Aorta (tissue), 5 donors: ENCODE measurements at regions of chr1 and their contacts with region 1.

Region 1: GRCh38 chr1:85330711-85331290 is 54.4 kb upstream of the BCL10 start:
- DNase-seq: peak in 1 of 2 donors; percentile 66
- ATAC-seq: no peak
- H3K4me3 ChIP-seq: no peak overlapping the region
- H3K27ac ChIP-seq: peak overlapping the region; percentile 95
- H3K4me1 ChIP-seq: peaks cover 0 to 15% of the 10 kb centered on the region in 2 donors
- H3K27me3 ChIP-seq: no peaks in the 10 kb centered on the region

Region 2: GRCh38 chr1:84810343-84810742 is 520.5 kb before region 1 on chr1:
- intact Hi-C with region 1: no loop called
- DNase-seq: no peak
- ATAC-seq: no peak
- H3K4me3 ChIP-seq: no peak overlapping the region
- H3K27ac ChIP-seq: no peak overlapping the region
- H3K4me1 ChIP-seq: no peaks in the 10 kb centered on the region
- H3K27me3 ChIP-seq: no peaks in the 10 kb centered on the region

Region 3: GRCh38 chr1:85220756-85221201 is 110.0 kb before region 1 on chr1:
- intact Hi-C with region 1: no loop called
- DNase-seq: no peak
- ATAC-seq: no peak
- H3K4me3 ChIP-seq: no peak overlapping the region
- H3K27ac ChIP-seq: peak overlapping the region in 1 of 2 donors; percentile 24
- H3K4me1 ChIP-seq: peaks cover 0 to 4% of the 10 kb centered on the region in 2 donors
- H3K27me3 ChIP-seq: no peaks in the 10 kb centered on the region

Region 4: DNA sequence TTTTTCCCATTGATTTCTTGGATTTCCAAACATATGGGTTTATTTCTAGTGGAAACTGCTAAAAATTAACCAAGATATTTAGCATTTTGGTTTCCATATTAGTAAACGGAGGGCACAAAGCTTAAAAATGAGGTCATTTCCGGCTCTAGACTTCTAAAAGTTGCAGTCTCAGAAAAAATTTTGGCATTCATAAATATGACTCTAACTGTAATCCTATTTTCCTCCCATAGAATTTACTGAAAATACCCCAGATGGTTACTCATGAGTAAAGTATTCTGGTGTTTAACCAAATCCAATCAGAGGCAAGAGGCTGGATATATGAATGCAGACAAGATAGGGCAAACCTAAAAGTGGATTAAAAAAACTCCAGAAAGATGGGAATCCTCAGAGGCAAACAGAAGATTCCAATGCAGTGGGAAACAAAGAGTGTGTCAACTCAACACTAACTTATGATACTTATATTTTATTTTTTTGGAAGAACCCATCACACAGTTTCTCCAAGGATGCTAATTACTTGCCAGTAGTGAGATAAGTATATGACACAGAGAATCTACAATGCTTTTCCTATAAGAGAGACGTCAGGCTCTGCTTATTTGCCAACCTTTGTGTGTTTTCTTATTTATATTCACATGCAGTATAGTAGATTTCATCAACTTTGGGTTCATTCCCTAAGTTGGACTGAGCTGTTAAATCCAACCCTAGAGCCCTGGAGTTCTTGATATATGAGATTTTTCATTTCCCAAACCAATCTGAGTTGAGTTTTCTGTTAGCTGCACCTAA is 35.8 kb after region 1 on chr1:
- intact Hi-C with region 1: loop called in 1 of 2 experiments (anchors 5 kb)
- DNase-seq: no peak
- ATAC-seq: no peak
- H3K4me3 ChIP-seq: no peak overlapping the region
- H3K27ac ChIP-seq: peak overlapping the region in 1 of 2 donors; percentile 67
- H3K4me1 ChIP-seq: peaks cover 1 to 11% of the 10 kb centered on the region in 2 donors
- H3K27me3 ChIP-seq: no peaks in the 10 kb centered on the region

Region 5: DNA sequence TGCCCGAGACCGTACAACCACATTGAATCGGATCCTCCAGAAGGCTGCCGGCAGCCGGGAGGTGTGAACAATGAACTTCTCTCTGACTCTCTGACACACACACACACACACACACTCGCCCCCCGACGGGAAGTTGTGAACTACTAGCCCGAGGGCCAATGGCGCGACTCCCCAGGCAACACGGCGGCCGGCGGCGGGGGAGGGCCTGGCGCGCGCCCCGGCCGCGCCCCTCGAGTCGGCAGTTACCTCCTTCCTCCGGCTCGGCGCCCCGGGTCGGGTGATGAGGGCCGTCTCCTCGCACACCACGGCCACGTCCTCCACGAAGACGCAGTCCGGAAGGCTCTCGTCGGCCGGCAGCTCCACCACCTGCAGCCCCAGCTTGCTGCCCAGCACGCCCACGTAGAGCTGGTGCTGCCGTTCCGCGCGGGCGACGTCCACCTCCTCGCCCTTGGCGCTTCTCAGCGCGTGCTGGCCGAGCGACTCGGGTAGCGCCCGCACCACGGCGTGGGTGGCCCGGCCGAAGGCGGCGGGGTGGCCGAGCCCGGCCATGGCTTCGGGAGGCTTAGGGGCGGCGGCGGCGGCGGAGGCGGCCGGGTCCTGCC is 133.8 kb after region 1 on chr1:
- intact Hi-C with region 1: loop called in 1 of 2 experiments (anchors 5 kb)
- DNase-seq: peak; percentile 80 to 91
- ATAC-seq: peak; percentile 82
- H3K4me3 ChIP-seq: peak overlapping the region; percentile 35 to 86
- H3K27ac ChIP-seq: peak overlapping the region; percentile 33 to 52
- H3K4me1 ChIP-seq: peaks cover 4 to 5% of the 10 kb centered on the region in 2 donors
- H3K27me3 ChIP-seq: no peaks in the 10 kb centered on the region